Sciatic nerve (tissue), 2 donors: ENCODE measurements at regions of chr13 and their contacts with region 1.

Region 1: DNA sequence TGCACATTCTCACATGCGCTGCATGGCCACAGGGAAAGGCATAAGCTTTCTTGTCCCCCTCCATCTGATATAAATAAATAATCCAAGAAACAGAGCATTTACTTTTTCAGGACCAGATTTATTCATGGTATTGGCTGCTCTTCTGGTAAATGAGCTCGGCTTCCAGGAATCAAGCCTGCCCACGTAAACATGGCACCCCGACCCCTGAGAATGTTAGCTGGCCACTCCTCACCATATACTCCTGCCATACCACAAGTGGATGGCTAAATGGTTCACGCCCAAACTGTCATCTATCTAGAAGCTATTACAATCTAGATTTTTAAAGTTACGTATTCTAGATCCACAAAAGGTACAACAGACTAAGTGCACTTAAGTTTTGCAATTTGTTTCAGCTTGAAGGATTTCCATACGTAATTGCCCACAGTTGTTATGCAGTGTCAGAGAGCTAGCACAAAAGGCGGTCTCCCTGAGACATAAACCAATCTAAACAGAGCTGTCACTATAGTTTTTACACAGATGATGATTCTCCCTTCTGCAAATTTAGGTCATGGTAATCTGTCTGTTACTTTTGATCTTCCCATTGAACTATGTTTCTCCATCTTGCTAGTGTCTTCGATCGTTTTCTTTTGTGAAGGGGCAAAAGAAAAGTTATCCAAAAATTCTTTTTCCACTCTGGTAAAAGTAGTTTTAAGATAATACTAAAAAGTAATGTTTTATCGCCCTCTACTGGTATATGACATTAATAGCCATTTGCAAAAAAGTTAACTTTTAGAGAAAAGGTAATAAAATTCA is 16.2 kb upstream of the FOXO1 start:
- DNase-seq: no peak
- ATAC-seq: peak; percentile 46

Region 2: DNA sequence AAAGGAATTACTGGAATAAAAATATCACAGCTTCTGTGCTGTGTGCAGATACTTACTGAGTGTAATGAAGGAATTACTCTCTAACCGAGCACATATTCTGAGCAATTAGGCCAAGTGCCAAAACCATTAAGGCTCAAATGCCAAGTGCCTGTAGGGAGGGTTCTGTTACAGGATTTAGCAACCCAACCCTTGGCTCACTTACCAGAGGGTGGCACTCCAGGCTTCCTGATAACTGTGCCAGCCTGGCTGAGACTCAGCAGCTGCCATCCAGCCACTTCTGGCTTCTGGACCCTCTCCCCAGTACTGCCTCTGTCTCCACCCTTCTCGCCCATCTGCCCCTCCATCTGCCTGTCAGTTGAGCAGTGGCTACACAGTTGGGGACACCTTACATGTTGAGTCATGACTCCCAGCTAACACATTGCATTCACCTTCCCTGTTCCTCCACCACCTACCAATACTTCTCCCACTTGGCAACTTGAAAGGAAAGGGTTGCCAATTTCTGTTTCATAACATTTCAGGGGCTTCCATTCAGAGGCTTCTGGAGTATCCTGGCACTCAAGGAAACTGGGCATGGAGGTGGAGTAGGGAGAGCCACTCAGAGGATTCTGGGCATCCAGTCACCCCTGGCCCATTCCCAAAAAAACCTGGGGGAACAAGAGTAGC is 916.7 kb before region 1 on chr13:
- intact Hi-C with region 1: loop called (anchors 5 kb)
- DNase-seq: peak; percentile 64
- ATAC-seq: peak; percentile 86

Region 3: DNA sequence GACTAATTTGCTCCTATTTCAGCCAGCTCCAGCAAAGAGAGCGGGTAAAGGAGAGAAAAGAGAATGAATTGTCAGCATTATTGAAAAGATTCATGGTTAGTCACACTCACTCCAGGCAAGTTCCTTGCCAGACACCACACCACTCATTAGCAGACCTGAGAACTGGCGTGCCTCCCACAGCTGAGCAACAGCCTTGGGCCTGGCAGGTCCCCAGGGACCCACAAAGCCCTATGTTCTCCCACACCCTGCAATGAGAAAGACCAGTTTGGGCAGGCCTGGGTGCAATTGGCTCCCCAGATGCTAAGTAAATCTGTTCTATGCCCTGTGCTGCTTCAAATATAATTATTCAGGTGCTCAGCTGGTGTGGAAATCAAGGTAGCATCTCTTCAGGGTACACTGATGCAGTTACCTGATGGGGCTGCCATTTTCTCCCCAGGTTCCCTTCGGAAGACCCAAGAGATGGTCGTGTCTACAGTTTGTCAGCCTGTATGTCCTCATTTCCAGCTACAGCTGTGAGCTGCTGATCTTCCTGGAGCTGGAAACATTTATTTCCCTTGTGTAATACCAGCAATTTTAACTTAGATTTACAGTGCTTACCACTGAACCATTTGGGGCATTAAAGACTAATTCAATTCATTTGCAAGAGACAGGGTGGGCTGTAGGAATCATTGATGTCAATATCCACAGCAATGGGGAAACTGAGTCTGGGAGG is 622.2 kb before region 1 on chr13:
- intact Hi-C with region 1: loop called (anchors 5 kb)
- DNase-seq: no peak
- ATAC-seq: peak; percentile 79

Region 4: GRCh38 chr13:41178040-41178439 is 495.4 kb after region 1 on chr13:
- intact Hi-C with region 1: no loop called
- DNase-seq: no peak
- ATAC-seq: no peak